ENCODE measurements at regions of chr7 and their contacts with region 1.

Region 1: DNA sequence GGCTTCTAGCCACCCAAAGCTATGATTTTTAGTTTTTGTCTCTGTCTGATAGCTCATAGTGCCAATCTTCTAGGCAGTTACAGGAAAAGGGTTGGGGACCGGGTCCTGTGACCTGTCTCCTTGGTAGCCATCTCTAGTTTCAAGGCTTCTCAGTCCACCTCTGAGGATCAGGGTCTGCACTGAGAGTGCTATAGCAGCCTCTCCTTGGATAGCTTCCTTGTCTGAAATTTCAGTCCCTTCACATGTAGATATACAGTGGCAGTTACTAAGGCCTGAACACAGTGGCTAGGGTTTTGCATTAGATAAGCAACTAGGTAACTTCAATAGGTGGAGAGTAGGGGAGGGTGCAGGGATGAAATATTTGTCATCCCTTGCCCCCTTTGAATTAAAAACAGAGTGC is 321.3 kb downstream of the SEMA3D start:
- DNase-seq: no peak
- H3K4me3 ChIP-seq: no peak overlapping the region
- H3K27ac ChIP-seq: no peak overlapping the region
- H3K4me1 ChIP-seq: no peaks in the 10 kb centered on the region
- H3K27me3 ChIP-seq: no peaks in the 10 kb centered on the region
- CTCF ChIP-seq: no peak
- POLR2A ChIP-seq: no peak

Region 2: DNA sequence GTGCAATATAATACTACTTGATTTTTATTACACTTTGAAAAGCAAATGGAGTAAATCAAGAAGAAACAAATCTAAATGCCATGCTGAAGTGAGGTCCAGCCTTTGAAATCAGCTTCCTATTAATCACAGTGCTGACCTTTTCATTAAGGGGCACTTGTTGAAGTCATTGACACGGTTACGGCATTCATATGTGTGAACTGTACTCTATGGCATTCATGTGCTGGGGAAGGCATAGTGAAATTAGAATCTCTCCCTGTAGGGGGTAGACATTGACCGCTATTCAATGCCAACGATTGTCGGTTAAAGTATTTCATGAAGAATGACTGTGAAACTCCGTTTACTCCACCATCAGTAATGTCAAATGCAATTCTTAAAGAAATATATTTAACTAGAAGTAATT is 374.9 kb before region 1 on chr7:
- CTCF ChIA-PET with region 1: no interaction called
- POLR2A ChIA-PET with region 1: no interaction called
- dilution Hi-C with region 1: no loop called
- intact Hi-C with region 1: no loop called
- DNase-seq: no peak
- H3K4me3 ChIP-seq: no peak overlapping the region
- H3K27ac ChIP-seq: no peak overlapping the region
- H3K4me1 ChIP-seq: no peaks in the 10 kb centered on the region
- H3K27me3 ChIP-seq: no peaks in the 10 kb centered on the region
- CTCF ChIP-seq: no peak
- POLR2A ChIP-seq: no peak

Region 3: GRCh38 chr7:84548366-84549365 is 316.9 kb before region 1 on chr7:
- CTCF ChIA-PET with region 1: no interaction called
- POLR2A ChIA-PET with region 1: no interaction called
- dilution Hi-C with region 1: no loop called
- intact Hi-C with region 1: loop called (anchors 10 kb)
- DNase-seq: no peak
- H3K4me3 ChIP-seq: no peak overlapping the region
- H3K27ac ChIP-seq: no peak overlapping the region
- H3K4me1 ChIP-seq: no peaks in the 10 kb centered on the region
- H3K27me3 ChIP-seq: no peaks in the 10 kb centered on the region
- CTCF ChIP-seq: no peak
- POLR2A ChIP-seq: no peak

Region 4: DNA sequence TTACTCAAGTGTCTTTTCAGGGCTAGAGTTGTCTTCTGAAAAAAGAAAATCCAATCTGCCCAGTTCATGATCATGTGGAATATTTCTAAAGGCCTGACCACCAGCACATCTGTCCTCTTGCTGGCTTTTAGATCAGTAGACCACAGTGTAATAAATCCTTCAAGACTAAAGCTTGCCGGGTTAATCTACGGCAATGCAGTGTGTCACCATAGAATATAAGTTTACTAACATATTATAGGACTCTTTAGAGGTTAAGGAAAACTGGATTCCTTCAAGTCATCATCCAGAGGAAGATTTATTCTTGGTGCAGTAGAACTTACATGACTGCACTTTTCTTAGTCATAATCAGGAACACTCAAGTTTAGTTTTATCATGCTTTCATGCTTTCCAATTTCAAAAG is 28.2 kb before region 1 on chr7:
- CTCF ChIA-PET with region 1: no interaction called
- POLR2A ChIA-PET with region 1: no interaction called
- dilution Hi-C with region 1: no loop called
- intact Hi-C with region 1: no loop called
- DNase-seq: no peak
- H3K4me3 ChIP-seq: no peak overlapping the region
- H3K27ac ChIP-seq: no peak overlapping the region
- H3K4me1 ChIP-seq: no peaks in the 10 kb centered on the region
- H3K27me3 ChIP-seq: no peaks in the 10 kb centered on the region
- CTCF ChIP-seq: no peak
- POLR2A ChIP-seq: no peak

Measured in endothelial cell of umbilical vein (primary cell).